Esophagus squamous epithelium (tissue), 5 donors: ENCODE measurements at regions of chr9 and their contacts with region 1.

Region 1: DNA sequence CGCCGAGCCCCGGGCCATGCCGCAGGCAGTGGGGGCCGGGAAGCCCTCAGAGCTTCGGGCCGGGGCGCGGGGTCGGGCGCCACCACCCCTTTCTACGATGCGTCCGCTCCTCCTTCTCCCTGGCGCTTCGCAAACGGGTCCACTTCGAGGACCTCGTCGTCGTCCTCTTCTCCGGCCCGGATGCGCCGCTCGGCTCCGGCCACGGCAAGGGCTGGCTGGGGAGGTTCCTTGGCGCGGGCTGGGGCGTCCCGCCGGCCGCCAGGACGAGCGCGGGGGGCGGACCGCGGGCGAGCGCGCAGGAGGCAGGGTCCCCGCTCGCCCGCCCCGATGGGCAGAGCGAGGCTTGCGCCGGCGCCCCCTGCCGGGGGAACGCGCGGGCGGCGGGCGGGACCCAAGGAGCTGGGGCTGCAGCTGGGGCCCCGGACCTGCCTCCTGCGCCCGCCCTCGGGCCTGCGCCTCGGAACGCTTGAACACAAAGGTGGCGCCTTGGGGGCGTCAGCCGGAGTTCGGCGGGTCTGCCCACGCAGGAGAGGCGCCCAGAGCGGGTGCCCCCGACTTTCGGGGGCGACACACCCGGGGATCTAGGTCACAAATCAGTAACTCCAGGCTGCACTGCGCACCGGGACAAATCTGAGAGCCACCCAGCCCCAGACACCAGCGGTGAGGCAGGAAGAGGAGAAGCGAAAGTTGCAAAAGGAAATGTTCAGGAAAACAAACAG is at the start of gene ROR2:
- DNase-seq: no peak
- H3K4me3 ChIP-seq: peak within 1 kb of the TSS; percentile 39 to 75 (median 54)
- H3K27ac ChIP-seq: peak within 1 kb of the TSS; percentile 78 to 90 (median 84)
- H3K4me1 ChIP-seq: peaks cover 8 to 65% (median 23%) of the 10 kb centered on the region in 3 donors
- H3K27me3 ChIP-seq: peaks cover 0 to 89% (median 4%) of the 10 kb centered on the region in 4 donors
- CTCF ChIP-seq: peak in 5 of 6 experiments; percentile 48 to 75 (median 71)
- POLR2A ChIP-seq: peak in 2 of 4 donors; percentile 41 to 54
- total RNA-seq, gene ROR2: 0.68 to 12.6 (median 3.7) TPM

Region 2: GRCh38 chr9:91775011-91775707 is 174.9 kb before region 1 on chr9:
- intact Hi-C with region 1: loop called (anchors 5 kb)
- DNase-seq: no peak
- H3K4me3 ChIP-seq: no peak overlapping the region
- H3K27ac ChIP-seq: peak overlapping the region in 1 of 4 donors; percentile 24
- H3K4me1 ChIP-seq: peaks cover 14 to 64% (median 34%) of the 10 kb centered on the region in 3 donors
- H3K27me3 ChIP-seq: peaks cover 0 to 19% (median 0%) of the 10 kb centered on the region in 4 donors
- CTCF ChIP-seq: peak; percentile 57 to 80 (median 76)
- POLR2A ChIP-seq: no peak

Region 3: DNA sequence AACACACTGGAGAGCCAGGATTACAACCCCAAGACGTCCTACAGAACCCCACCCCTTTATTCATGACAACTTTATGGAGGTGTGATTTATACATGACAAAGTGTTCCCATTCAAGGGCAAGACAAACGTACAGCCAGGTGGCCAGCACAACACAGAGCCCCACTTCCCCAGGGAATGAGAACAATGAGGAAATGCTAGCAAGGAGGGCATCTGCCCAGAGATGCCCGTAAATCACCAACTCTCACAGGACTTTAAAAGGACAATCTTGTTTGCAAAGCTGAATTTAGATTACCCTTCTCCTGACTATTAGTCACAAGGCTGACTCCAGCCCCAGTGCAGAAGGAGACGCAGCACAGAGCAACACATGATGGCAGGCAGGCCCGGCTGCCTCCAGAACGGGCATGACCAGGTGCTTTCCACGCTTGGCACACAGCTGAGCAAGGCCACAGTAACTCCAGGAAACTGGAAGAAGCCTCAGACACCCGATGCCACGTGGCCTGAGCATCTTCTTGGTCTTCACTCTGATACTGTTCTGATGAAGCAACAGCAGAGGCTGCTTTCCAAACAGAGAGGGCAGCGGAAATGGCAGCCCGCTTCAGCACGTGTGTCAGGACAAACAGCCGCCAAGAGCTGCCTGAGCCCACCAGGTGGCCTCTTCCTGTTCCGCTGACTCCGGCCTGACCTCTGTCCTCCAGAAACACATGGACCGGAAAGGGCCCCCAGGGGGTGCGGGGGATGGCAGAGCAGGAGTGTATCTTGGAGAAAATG is 51.5 kb before region 1 on chr9:
- intact Hi-C with region 1: no loop called
- DNase-seq: no peak
- H3K4me3 ChIP-seq: no peak overlapping the region
- H3K27ac ChIP-seq: peak overlapping the region in 2 of 4 donors; percentile 65 to 73
- H3K4me1 ChIP-seq: peaks cover 20 to 86% (median 43%) of the 10 kb centered on the region in 3 donors
- H3K27me3 ChIP-seq: peaks cover 0 to 34% (median 0%) of the 10 kb centered on the region in 4 donors
- CTCF ChIP-seq: no peak
- POLR2A ChIP-seq: no peak